PC-9 (cell line): ENCODE measurements at regions of chr20 and their contacts with region 1.

Region 1: DNA sequence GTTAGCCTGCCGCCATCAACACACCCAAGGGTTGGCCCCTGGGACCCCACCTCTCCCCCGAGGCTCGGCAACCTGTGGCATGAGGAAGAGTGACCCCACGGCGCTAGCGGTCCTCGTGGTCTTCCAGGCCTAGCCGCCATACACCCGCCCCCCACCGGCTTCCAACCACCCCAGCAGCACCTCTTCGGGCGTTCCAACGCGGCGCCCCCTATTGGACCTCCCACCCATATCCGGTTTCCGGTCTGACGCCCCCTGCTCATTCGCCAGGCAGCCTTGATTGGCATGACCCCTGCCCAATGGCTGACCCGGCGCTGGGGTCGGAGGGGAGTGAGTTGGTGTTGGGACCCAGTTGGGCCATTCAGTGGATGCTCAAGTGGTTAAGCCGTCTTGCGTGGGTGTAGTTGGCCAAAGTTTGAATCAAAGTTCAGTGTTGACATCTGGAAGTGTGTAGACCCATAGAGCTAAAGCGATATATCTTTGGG is at the start of gene GNAS-AS1:
- DNase-seq: peak; percentile 71 to 90
- H3K4me3 ChIP-seq: peak within 1 kb of the TSS; percentile 73
- H3K27ac ChIP-seq: no peak within 1 kb of the TSS
- H3K4me1 ChIP-seq: peaks cover 4% of the 10 kb centered on the region; the same call in 1 of the 2 replicates
- H3K27me3 ChIP-seq: peaks cover 33% of the 10 kb centered on the region
- CTCF ChIP-seq: no peak; the same call in 1 of the 2 replicates
- total RNA-seq, gene GNAS-AS1: 5.7 and 6.8 TPM in 2 replicates

Region 2: DNA sequence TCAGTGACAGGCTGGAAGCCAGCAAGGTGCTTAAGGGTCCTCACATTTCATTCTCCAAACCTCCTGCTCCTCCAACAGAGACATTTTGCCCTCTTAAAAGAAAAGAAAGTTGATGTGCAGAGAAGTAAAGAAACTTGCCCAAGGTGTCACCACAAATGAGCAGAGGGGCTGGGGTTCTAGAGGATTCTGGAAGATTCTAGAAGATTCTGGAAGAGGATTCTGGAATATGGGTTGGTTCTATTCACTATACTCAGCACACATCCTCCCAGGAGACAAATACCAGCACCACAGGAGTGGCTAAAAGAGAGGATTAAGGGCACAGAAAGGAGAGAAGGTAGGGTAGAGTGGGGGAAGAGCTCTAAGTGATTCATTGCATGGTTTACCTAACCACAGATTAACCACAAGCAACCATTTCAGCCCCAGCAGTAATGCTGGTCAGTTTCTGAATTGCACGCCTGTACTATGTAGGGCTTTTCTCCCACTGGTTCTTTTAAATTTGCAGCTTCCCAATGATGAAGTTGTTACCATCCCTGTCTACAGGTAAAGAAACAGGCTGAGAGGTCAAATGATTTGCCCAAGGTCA is 948.4 kb before region 1 on chr20:
- CTCF ChIA-PET with region 1: no interaction called
- POLR2A ChIA-PET with region 1: no interaction called
- intact Hi-C with region 1: no loop called
- DNase-seq: peak; percentile 43 to 75
- H3K4me3 ChIP-seq: no peak overlapping the region
- H3K27ac ChIP-seq: no peak overlapping the region
- H3K4me1 ChIP-seq: peaks cover 30% of the 10 kb centered on the region
- H3K27me3 ChIP-seq: no peaks in the 10 kb centered on the region
- CTCF ChIP-seq: peak; percentile 45; the same call in 1 of the 2 replicates

Region 3: DNA sequence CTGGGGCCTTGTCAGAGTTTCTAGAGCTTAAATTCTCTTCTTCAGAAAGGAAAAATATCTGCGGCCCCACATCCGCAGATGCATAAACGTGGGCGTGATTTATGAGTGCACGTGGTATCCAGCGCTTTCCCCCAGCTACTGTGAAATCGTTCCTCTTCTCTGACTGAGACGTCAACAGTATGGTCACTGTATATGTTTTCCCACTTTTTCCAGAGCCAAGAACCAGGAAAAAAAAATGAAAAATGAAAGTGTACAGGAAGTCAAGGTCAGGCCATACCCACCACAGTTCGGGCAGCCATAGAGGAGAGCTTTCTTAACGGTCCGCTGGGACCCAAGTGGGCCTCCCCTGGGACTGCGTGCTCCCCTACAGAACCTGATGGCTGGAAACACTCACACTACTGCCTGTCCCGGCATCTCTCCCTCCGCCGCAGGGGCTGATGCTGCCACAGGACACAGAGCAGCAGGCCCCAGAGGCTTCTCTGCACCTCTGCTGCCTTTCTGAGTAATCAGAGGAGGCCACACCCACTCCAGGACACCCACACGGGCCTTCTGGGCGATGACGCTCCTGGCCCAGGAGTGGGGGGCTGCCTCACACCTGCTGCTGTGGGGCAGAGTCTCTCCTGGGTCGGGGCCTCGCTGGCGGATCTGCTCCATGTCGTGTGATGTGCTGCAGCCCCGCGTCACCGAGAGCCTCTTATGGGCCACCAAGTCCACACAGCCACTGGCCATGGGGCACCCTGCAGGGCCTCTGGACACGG is 216.0 kb before region 1 on chr20:
- CTCF ChIA-PET with region 1: no interaction called
- POLR2A ChIA-PET with region 1: no interaction called
- intact Hi-C with region 1: no loop called
- DNase-seq: no peak
- H3K4me3 ChIP-seq: no peak overlapping the region
- H3K27ac ChIP-seq: no peak overlapping the region
- H3K4me1 ChIP-seq: peaks cover 9% of the 10 kb centered on the region
- H3K27me3 ChIP-seq: no peaks in the 10 kb centered on the region
- CTCF ChIP-seq: no peak

Region 4: GRCh38 chr20:58740054-58740936 is 110.4 kb before region 1 on chr20:
- CTCF ChIA-PET with region 1: no interaction called
- POLR2A ChIA-PET with region 1: no interaction called
- intact Hi-C with region 1: no loop called
- DNase-seq: no peak
- H3K4me3 ChIP-seq: no peak overlapping the region
- H3K27ac ChIP-seq: no peak overlapping the region
- H3K4me1 ChIP-seq: no peaks in the 10 kb centered on the region
- H3K27me3 ChIP-seq: peaks cover 82% of the 10 kb centered on the region
- CTCF ChIP-seq: no peak

Region 5: GRCh38 chr20:58818585-58819285 is 32.0 kb before region 1 on chr20:
- CTCF ChIA-PET with region 1: no interaction called
- POLR2A ChIA-PET with region 1: no interaction called
- intact Hi-C with region 1: loop called (anchors 1 kb)
- DNase-seq: peak; percentile 65 to 77
- H3K4me3 ChIP-seq: no peak overlapping the region
- H3K27ac ChIP-seq: no peak overlapping the region
- H3K4me1 ChIP-seq: no peaks in the 10 kb centered on the region
- H3K27me3 ChIP-seq: peaks cover 30% of the 10 kb centered on the region; the same call in 1 of the 2 replicates
- CTCF ChIP-seq: no peak

Region 6: GRCh38 chr20:59010995-59011873 is 160.5 kb after region 1 on chr20:
- CTCF ChIA-PET with region 1: interaction called, 24 read pairs
- POLR2A ChIA-PET with region 1: no interaction called
- intact Hi-C with region 1: no loop called
- DNase-seq: peak; percentile 90 to 91
- H3K4me3 ChIP-seq: peak overlapping the region; percentile 12; the same call in 1 of the 2 replicates
- H3K27ac ChIP-seq: peak overlapping the region; percentile 68
- H3K4me1 ChIP-seq: peaks cover 44% of the 10 kb centered on the region
- H3K27me3 ChIP-seq: no peaks in the 10 kb centered on the region
- CTCF ChIP-seq: no peak